Naive thymus-derived CD4-positive, alpha-beta T cell (primary cell): ENCODE measurements at regions of chr2 and their contacts with region 1.

Region 1: GRCh38 chr2:189347540-189347939 is 93.7 kb upstream of the WDR75 start:
- DNase-seq: peak in 7 of 9 donors; percentile 14 to 58 (median 47)
- ATAC-seq: peak; percentile 52
- H3K4me3 ChIP-seq: no peak overlapping the region
- H3K4me3 Mint-ChIP-seq: no peak overlapping the region
- H3K27ac ChIP-seq: no peak overlapping the region
- H3K27ac Mint-ChIP-seq: peak overlapping the region in 1 of 9 donors; percentile 62
- H3K4me1 ChIP-seq: peaks cover 0 to 7% of the 10 kb centered on the region in 2 donors
- H3K4me1 Mint-ChIP-seq: peaks cover 7 to 22% (median 18%) of the 10 kb centered on the region in 7 donors
- H3K27me3 ChIP-seq: no peaks in the 10 kb centered on the region
- H3K27me3 Mint-ChIP-seq: no peaks in the 10 kb centered on the region

Region 2: DNA sequence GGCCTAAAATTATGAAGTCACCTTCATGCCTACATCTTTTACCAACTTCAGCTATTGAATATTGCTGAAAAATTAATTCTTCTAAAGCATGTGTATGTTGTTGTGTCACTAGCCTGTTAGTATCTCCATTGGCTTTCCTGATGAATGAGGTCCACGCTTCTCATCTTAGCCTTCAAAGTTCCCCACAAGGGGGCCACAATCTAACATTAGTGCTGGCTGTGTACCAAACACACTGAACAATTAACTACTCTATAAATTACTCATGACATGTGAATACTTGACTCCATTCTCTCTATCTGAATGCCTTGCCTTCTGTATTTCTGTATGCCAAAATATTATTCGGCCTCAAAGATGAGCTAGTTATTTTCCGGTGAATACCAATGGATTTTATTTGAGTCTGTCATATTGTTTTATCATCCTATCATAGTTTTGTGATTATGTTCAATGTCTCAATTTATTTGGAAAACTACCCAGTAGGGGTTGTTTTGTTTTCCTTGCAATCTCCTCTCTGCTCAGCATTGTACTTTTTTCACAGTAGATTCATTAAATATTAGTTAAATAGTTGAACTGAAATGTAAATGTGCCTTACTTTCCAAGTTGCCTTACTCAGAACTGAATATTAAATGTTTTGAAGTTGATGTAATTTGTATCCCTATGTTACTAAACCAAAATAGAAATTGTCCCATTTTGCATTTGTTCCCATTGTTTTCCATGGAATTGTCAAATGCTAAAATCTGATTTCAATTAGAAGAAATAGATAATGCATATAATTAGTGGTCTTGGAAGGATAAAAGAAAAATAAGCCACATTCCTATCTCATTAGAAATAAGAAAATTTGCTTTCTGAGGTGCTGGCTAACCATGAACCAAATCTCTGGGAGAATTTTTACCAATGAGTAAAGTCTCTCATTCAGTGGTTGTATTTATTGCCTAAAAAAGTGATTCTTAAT is 581.7 kb before region 1 on chr2:
- CTCF ChIA-PET with region 1: no interaction called
- POLR2A ChIA-PET with region 1: no interaction called
- intact Hi-C with region 1: loop called in 1 of 2 experiments (anchors 10 kb)
- DNase-seq: no peak
- ATAC-seq: no peak
- H3K4me3 ChIP-seq: no peak overlapping the region
- H3K4me3 Mint-ChIP-seq: no peak overlapping the region
- H3K27ac ChIP-seq: no peak overlapping the region
- H3K27ac Mint-ChIP-seq: no peak overlapping the region
- H3K4me1 ChIP-seq: no peaks in the 10 kb centered on the region
- H3K4me1 Mint-ChIP-seq: no peaks in the 10 kb centered on the region
- H3K27me3 ChIP-seq: no peaks in the 10 kb centered on the region
- H3K27me3 Mint-ChIP-seq: no peaks in the 10 kb centered on the region

Region 3: GRCh38 chr2:189096769-189097447 is 250.6 kb before region 1 on chr2:
- CTCF ChIA-PET with region 1: interaction called, 10 read pairs
- POLR2A ChIA-PET with region 1: no interaction called
- intact Hi-C with region 1: loop called (anchors 1 kb)
- DNase-seq: no peak
- ATAC-seq: no peak
- H3K4me3 ChIP-seq: no peak overlapping the region
- H3K4me3 Mint-ChIP-seq: no peak overlapping the region
- H3K27ac ChIP-seq: no peak overlapping the region
- H3K27ac Mint-ChIP-seq: no peak overlapping the region
- H3K4me1 ChIP-seq: no peaks in the 10 kb centered on the region
- H3K4me1 Mint-ChIP-seq: peaks cover 0 to 5% (median 0%) of the 10 kb centered on the region in 7 donors
- H3K27me3 ChIP-seq: no peaks in the 10 kb centered on the region
- H3K27me3 Mint-ChIP-seq: no peaks in the 10 kb centered on the region

Region 4: GRCh38 chr2:189142893-189143759 is 204.4 kb before region 1 on chr2:
- CTCF ChIA-PET with region 1: interaction called, 11 read pairs
- POLR2A ChIA-PET with region 1: no interaction called
- intact Hi-C with region 1: loop called (anchors 1 kb)
- DNase-seq: peak in 8 of 9 donors; percentile 35 to 68 (median 56)
- ATAC-seq: peak; percentile 88
- H3K4me3 ChIP-seq: no peak overlapping the region
- H3K4me3 Mint-ChIP-seq: no peak overlapping the region
- H3K27ac ChIP-seq: no peak overlapping the region
- H3K27ac Mint-ChIP-seq: peak overlapping the region in 1 of 9 donors; percentile 10
- H3K4me1 ChIP-seq: no peaks in the 10 kb centered on the region
- H3K4me1 Mint-ChIP-seq: peaks cover 0 to 6% (median 0%) of the 10 kb centered on the region in 7 donors
- H3K27me3 ChIP-seq: no peaks in the 10 kb centered on the region
- H3K27me3 Mint-ChIP-seq: no peaks in the 10 kb centered on the region

Region 5: DNA sequence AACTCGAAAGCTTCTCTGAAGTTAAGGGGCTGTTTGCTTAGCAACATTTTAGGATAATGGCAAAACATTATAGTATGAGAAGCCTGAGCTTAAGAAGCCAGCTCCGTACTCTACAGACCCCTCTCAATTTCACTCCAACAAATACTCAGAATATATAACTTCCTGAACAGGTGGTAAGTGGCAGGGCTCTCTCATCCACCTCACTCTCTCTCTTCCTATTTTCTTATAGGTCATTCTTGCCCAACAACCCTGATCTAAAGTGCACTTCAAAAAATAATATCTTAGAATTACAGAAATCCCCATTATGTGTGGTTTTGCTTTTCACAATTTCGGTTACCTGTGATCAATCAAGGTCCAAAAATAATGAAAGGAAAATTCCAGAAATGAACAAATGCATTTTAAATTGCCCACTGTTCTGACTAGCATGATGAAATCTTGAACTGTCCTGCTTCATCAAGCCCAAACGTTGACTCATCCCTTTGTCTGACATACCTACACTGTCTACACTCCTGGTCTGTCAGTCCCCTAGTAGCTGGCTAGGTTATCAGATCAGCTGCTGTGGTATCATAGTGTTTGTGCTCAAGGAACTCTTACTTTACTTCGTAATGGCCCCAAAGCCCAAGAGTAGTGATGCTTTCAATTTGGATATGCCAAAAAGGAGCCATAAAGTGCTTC is 45.1 kb before region 1 on chr2:
- CTCF ChIA-PET with region 1: no interaction called
- POLR2A ChIA-PET with region 1: no interaction called
- intact Hi-C with region 1: loop called in 1 of 2 experiments (anchors 2 kb)
- DNase-seq: no peak
- ATAC-seq: no peak
- H3K4me3 ChIP-seq: no peak overlapping the region
- H3K4me3 Mint-ChIP-seq: peak overlapping the region in 8 of 10 donors; percentile 4 to 74 (median 60)
- H3K27ac ChIP-seq: no peak overlapping the region
- H3K27ac Mint-ChIP-seq: peak overlapping the region in 8 of 9 donors; percentile 25 to 95 (median 70)
- H3K4me1 ChIP-seq: peaks cover 56 to 88% of the 10 kb centered on the region in 2 donors
- H3K4me1 Mint-ChIP-seq: peaks cover 57 to 96% (median 91%) of the 10 kb centered on the region in 7 donors
- H3K27me3 ChIP-seq: no peaks in the 10 kb centered on the region
- H3K27me3 Mint-ChIP-seq: no peaks in the 10 kb centered on the region